ENCODE measurements at regions of chr9 and their contacts with region 1.

Region 1: DNA sequence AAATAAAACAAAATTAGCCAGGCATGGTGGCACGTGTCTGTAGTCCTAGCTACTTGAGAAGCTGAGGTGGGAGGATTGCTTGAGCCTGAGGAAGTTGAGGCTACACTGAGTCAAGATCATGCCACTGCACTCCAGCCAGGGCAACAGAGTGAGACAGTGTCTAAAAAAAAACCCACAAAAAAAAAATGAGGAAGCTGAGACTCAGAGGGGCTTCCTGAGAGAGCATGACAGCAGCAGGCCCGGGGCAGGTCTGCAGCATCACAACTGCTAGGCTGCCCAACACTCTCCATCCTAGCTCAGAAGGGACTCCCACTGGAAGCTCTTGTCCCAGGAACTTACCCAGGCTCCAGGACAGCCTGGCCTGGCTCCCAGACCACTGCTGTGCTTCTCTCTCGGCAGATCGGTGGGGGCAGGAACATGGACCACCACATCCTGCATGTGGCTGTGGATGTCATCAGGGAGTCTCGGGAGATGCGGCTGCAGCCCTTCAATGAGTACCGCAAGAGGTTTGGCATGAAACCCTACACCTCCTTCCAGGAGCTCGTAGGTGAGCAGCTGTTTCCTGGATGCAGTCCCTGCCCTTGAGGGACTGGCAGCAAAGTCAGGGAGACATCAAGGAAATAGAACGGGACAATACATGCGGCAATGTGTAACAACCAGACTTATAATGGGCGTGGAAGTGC is 19.1 kb downstream of the PTGS1 start:
- DNase-seq: peak; percentile 67 to 94 (median 91)
- H3K4me3 ChIP-seq: peak overlapping the region in 1 of 7 experiments; percentile 0
- H3K27ac ChIP-seq: no peak overlapping the region
- H3K4me1 ChIP-seq: peaks cover 0 to 26% (median 16%) of the 10 kb centered on the region in 4 experiments
- H3K27me3 ChIP-seq: no peaks in the 10 kb centered on the region

Region 2: DNA sequence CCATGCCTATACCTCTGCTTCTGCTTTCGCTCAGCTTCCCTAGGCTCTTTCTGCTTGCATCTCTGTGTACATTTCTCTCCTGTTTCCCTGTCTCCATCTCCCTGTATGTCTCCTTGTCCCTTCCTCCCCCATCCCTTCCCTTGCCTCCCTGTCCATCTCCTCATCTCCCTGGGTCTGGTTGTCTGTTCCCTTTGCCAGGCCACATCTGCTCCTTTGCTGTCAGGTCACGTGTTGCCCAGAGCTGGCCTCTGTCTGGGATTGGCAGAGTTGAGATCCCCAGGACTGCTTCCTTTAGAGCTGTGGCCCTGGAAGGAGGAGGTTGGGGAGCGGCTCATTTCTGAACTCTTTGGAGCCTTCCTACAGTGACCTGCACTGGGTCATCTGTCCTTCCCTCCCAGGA is 50.9 kb before region 1 on chr9:
- CTCF ChIA-PET with region 1: no interaction called
- POLR2A ChIA-PET with region 1: no interaction called
- DNase-seq: no peak
- H3K4me3 ChIP-seq: no peak overlapping the region
- H3K27ac ChIP-seq: no peak overlapping the region
- H3K4me1 ChIP-seq: peaks cover 0 to under 1% (median 0%) of the 10 kb centered on the region in 4 experiments
- H3K27me3 ChIP-seq: no peaks in the 10 kb centered on the region

Region 3: DNA sequence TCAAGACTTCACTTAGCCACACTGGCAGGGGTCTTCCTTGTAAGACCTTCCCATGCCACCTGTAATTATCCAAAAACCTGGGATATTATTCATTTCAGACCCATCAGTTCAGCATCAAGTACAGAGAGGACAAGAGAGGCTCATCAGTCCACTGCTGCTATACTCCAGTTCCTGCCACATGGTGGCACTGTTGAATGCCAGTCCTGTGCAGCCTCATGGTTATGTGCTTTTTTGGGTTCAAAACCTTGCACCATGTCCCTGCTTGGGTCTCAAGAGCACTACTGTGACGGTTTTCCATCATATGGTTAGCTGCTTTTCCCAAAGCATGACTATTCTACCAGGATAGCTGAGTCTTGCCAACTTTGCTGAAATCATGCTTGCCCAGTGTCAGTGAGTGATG is 10.6 kb before region 1 on chr9:
- CTCF ChIA-PET with region 1: interaction called, 10 read pairs
- POLR2A ChIA-PET with region 1: no interaction called
- DNase-seq: peak; percentile 14 to 52 (median 50)
- H3K4me3 ChIP-seq: no peak overlapping the region
- H3K27ac ChIP-seq: no peak overlapping the region
- H3K4me1 ChIP-seq: peaks cover 0 to 43% (median 34%) of the 10 kb centered on the region in 4 experiments
- H3K27me3 ChIP-seq: no peaks in the 10 kb centered on the region